Panc1 (cell line): ENCODE measurements at regions of chr1 and their contacts with region 1.

Region 1: GRCh38 chr1:167687919-167688519 is 33.8 kb upstream of the MPZL1 start:
- DNase-seq: peak; percentile 80
- ATAC-seq: peak; percentile 78
- H3K4me3 ChIP-seq: no peak overlapping the region
- H3K27ac ChIP-seq: no peak overlapping the region
- H3K4me1 ChIP-seq: peaks cover 2% of the 10 kb centered on the region; the same call in 1 of the 2 replicates
- H3K27me3 ChIP-seq: no peaks in the 10 kb centered on the region
- CTCF ChIP-seq: peak; percentile 90

Region 2: GRCh38 chr1:167499664-167500101 is 188.3 kb before region 1 on chr1:
- CTCF ChIA-PET with region 1: no interaction called
- POLR2A ChIA-PET with region 1: no interaction called
- in situ Hi-C with region 1: no loop called
- intact Hi-C with region 1: no loop called
- DNase-seq: no peak
- ATAC-seq: no peak
- H3K4me3 ChIP-seq: no peak overlapping the region
- H3K27ac ChIP-seq: no peak overlapping the region
- H3K4me1 ChIP-seq: no peaks in the 10 kb centered on the region
- H3K27me3 ChIP-seq: peaks cover 22% of the 10 kb centered on the region; the same call in 1 of the 2 replicates
- CTCF ChIP-seq: no peak

Region 3: GRCh38 chr1:167555971-167556714 is 131.9 kb before region 1 on chr1:
- CTCF ChIA-PET with region 1: interaction called, 3 read pairs
- POLR2A ChIA-PET with region 1: interaction called, 3 read pairs
- in situ Hi-C with region 1: no loop called
- intact Hi-C with region 1: loop called (anchors 5 kb)
- DNase-seq: peak; percentile 63
- ATAC-seq: peak; percentile 57; the same call in 1 of the 2 replicates
- H3K4me3 ChIP-seq: no peak overlapping the region
- H3K27ac ChIP-seq: no peak overlapping the region
- H3K4me1 ChIP-seq: peaks cover 6% of the 10 kb centered on the region
- H3K27me3 ChIP-seq: no peaks in the 10 kb centered on the region
- CTCF ChIP-seq: peak; percentile 86

Region 4: GRCh38 chr1:167599957-167600581 is 88.0 kb before region 1 on chr1:
- CTCF ChIA-PET with region 1: interaction called, 19 read pairs
- POLR2A ChIA-PET with region 1: interaction called, 5 read pairs
- in situ Hi-C with region 1: no loop called
- intact Hi-C with region 1: loop called (anchors 1 kb)
- DNase-seq: peak; percentile 20
- ATAC-seq: peak; percentile 82
- H3K4me3 ChIP-seq: no peak overlapping the region
- H3K27ac ChIP-seq: no peak overlapping the region
- H3K4me1 ChIP-seq: peaks cover 7% of the 10 kb centered on the region; the same call in 1 of the 2 replicates
- H3K27me3 ChIP-seq: no peaks in the 10 kb centered on the region
- CTCF ChIP-seq: peak; percentile 68

Region 5: DNA sequence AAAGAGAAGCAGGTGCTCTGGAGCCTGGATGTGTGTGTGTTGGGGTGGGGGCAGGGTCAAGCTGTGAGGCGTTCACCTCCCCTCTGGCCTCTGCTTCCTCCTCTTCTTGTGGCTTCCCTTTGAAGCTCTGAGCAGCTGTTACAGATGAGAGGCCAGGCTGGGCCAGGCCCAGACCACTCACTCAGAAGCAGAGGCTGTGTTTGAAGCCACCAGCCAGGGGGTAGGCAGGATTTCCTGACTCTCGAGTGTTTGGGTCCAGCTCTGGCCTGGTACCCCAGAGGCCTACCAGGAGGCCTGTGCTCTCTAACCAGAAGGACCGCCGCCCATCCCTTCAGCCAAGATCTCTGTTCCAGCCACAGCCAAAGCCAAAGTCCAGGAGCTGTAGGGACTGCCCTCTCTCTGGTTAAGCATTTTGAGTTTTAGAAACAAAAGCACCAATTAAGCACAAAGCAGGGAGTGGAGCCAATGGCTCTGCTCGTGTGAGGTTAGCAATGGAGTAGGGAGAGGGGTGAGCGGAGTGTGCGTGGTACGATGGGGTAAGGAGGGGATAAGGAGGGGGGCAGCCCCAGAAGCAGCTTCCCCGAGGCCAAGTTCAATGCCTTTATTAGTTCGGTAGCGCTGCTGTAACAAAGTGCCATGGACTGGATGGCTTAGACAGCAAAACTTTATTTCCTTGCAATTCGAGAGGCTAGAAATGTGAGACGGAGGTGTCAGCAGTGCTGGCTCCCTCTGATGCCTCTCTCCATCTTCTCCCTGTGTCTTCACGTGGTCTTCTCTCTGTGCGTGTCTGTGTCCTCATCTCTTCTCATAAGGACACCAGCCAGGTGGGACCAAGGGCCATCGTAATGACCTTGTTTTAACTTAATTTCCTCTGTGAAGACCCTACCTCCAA is 37.5 kb before region 1 on chr1:
- CTCF ChIA-PET with region 1: no interaction called
- POLR2A ChIA-PET with region 1: no interaction called
- in situ Hi-C with region 1: no loop called
- intact Hi-C with region 1: no loop called
- DNase-seq: no peak
- ATAC-seq: 0 out of 2 replicates have a peak, but pooled peaks have one; percentile 21
- H3K4me3 ChIP-seq: no peak overlapping the region
- H3K27ac ChIP-seq: no peak overlapping the region
- H3K4me1 ChIP-seq: no peaks in the 10 kb centered on the region
- H3K27me3 ChIP-seq: no peaks in the 10 kb centered on the region
- CTCF ChIP-seq: no peak